Activated B cell treated with CpG ODN at 0.5 μM for 24 hours (primary cell): ENCODE measurements at regions of chr3 and their contacts with region 1.

Region 1: DNA sequence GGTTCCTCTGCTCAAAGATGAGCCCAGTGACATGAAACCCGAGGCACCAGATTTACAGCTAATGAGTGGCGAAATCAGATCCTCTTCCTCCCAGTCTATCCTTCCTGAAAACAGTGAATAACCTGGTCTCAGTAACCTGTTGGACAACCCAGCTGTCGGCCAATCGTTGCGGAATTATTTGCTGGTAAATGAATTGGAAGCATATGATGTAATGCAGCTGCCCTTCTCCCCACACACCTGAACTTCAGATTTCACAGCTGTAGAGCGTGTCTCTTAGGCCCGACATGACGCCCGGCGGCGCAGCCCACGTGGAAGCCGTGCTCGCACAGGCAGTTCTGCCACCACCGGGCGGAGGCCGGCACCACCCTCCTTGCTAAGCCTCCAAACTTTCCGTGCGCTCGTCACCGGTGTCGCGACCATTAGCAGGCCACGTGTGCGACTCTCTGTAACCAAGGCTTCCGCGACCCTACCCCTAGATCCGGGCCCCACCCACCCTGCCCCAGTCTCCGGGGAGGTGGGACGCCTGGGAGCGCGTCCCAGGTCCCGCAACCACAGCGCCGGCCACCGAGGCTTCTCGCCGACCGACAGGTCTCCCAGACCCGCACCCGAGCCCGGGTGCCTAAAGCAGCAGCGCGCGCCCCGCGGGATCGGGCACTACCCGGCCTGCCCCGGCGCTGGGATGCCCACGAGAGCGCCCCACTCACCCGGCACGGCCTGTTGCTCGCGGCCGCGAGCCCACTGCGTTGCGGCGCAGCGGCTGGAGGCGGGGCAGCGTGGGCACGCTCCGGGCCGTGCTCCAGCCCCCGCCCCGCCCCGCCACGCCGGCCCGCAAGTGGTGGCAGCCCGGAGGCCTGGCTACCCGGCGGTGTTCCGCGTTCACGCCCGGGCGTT is at the start of gene RIOX2:
- DNase-seq: peak; percentile 75
- ATAC-seq: peak; percentile 93
- H3K4me3 Mint-ChIP-seq: peak within 1 kb of the TSS; percentile 89
- H3K27ac Mint-ChIP-seq: peak within 1 kb of the TSS; percentile 87
- H3K4me1 Mint-ChIP-seq: peaks cover 31% of the 10 kb centered on the region
- H3K27me3 Mint-ChIP-seq: no peaks in the 10 kb centered on the region
- CTCF ChIP-seq: no peak
- total RNA-seq, gene RIOX2: 33.7 and 34.8 TPM in 2 replicates

Region 2: GRCh38 chr3:97764407-97765238 is 207.3 kb before region 1 on chr3 and contains the start of gene ARL6:
- CTCF ChIA-PET with region 1: no interaction called
- POLR2A ChIA-PET with region 1: no interaction called
- intact Hi-C with region 1: loop called (anchors 1 kb)
- DNase-seq: peak; percentile 65
- ATAC-seq: peak; percentile 90
- H3K4me3 Mint-ChIP-seq: peak within 1 kb of the TSS; percentile 99
- H3K27ac Mint-ChIP-seq: peak within 1 kb of the TSS; percentile 95
- H3K4me1 Mint-ChIP-seq: peaks cover 23% of the 10 kb centered on the region
- H3K27me3 Mint-ChIP-seq: no peaks in the 10 kb centered on the region
- CTCF ChIP-seq: no peak
- total RNA-seq, gene ARL6: 2.5 and 4.2 TPM in 2 replicates

Region 3: GRCh38 chr3:97821810-97822775 is 149.8 kb before region 1 on chr3 and contains the start of gene CRYBG3:
- CTCF ChIA-PET with region 1: no interaction called
- POLR2A ChIA-PET with region 1: interaction called, 4 read pairs
- intact Hi-C with region 1: loop called (anchors 1 kb)
- DNase-seq: peak; percentile 80
- ATAC-seq: peak; percentile 99
- H3K4me3 Mint-ChIP-seq: peak within 1 kb of the TSS; percentile 88
- H3K27ac Mint-ChIP-seq: peak within 1 kb of the TSS; percentile 47
- H3K4me1 Mint-ChIP-seq: peaks cover 21% of the 10 kb centered on the region
- H3K27me3 Mint-ChIP-seq: peaks cover 44% of the 10 kb centered on the region
- CTCF ChIP-seq: no peak
- total RNA-seq, gene CRYBG3: 1.5 TPM in 2 replicates

Region 4: DNA sequence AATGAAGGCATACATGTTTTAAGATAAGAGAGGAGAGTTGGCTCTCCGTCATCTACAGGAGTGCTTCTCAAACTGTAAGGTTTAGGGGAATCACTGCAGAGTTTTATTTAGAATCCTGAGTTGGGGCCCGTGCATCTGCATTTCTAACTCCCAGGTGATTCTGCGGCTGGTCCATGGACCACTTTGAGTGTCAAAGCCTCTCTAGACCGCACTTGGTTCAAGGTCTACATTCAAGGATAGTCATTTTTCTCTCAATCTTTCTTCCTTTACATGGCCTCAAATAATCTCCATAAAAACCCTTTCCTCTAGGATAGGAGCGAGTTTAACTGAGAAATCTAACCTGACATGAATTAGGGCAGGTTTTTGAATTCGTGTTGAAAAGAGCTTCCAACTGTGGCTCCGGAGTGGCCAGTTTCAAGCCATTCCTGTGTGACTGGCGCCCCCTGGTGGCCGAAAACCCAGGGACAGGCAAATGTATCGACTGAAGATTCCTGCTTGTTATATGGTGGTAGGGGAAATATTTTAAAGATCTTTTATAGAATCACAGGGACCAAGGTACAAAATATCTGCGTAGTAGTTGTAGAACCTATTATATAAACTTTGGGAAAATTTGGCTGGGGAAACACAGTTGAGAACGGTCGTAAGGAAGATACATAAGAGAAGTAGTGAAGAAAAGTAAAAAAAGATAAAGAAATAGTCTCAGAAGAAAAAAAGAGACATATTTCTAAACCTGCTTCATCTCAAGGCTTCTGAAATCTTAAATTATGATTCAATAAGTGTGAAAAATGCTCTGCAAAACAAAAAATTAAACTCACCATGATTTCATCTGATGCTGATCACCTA is 51.3 kb after region 1 on chr3:
- CTCF ChIA-PET with region 1: no interaction called
- POLR2A ChIA-PET with region 1: no interaction called
- intact Hi-C with region 1: loop called (anchors 5 kb)
- DNase-seq: peak; percentile 79
- ATAC-seq: peak; percentile 66
- H3K4me3 Mint-ChIP-seq: no peak overlapping the region
- H3K27ac Mint-ChIP-seq: no peak overlapping the region
- H3K4me1 Mint-ChIP-seq: no peaks in the 10 kb centered on the region
- H3K27me3 Mint-ChIP-seq: peaks cover 5% of the 10 kb centered on the region
- CTCF ChIP-seq: peak; percentile 85

Region 5: DNA sequence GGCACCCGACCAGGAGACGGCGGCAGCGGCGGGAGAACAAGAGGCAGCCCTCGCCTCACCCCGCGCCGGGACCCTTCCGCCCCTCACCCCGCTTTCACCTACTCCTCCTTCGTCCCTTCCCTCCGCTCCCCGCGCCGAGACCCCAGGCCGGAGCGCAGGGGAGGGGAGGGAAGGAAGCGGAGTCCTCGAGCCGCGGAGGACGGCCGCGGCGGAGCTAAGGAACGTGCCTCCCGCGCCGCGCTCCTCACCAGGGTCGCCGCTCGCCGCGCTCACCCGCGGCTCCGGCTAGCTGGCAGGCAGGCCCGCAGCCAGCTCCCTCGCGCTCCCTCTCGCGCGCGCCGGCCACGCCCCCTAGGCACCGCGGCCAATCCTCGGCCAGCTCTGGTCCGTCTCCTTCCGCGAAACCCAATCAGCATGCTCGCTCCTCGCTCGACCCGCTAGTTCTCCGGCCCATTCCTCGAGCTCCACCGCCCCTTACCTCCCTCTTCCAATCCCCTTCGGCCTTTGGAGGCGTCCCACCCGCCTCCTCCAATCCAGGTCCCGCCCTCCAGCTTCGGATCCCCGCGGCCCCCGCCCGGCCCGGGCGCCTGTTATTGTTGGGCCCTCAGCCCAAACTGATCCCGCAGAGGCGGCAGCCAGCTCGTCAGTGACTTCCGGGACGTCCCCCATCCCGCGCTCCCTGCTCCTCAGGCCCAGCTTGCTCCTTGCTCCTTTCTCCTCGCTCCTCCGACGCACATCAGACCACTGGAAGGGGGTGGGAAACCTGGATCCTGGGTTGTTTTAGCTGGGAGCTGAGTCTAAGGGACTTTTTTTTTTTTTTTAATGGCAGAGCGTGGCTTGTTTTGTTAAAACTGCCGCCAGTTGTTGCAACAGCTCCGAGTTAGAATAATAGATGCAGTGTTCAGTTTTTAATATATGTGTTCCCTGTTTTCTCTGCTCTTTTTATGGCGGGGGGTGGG is 929.7 kb after region 1 on chr3 and contains the start of gene DCBLD2:
- CTCF ChIA-PET with region 1: no interaction called
- POLR2A ChIA-PET with region 1: no interaction called
- intact Hi-C with region 1: loop called (anchors 5 kb)
- DNase-seq: peak; percentile 86
- ATAC-seq: peak; percentile 98
- H3K4me3 Mint-ChIP-seq: peak within 1 kb of the TSS; percentile 88
- H3K27ac Mint-ChIP-seq: peak within 1 kb of the TSS; percentile 73
- H3K4me1 Mint-ChIP-seq: peaks cover 19% of the 10 kb centered on the region
- H3K27me3 Mint-ChIP-seq: peaks cover 12% of the 10 kb centered on the region
- CTCF ChIP-seq: no peak
- total RNA-seq, gene DCBLD2: 0.95 and 1.8 TPM in 2 replicates